Breast epithelium (tissue), 4 donors: ENCODE measurements at regions of chr11 and their contacts with region 1.

Region 1: DNA sequence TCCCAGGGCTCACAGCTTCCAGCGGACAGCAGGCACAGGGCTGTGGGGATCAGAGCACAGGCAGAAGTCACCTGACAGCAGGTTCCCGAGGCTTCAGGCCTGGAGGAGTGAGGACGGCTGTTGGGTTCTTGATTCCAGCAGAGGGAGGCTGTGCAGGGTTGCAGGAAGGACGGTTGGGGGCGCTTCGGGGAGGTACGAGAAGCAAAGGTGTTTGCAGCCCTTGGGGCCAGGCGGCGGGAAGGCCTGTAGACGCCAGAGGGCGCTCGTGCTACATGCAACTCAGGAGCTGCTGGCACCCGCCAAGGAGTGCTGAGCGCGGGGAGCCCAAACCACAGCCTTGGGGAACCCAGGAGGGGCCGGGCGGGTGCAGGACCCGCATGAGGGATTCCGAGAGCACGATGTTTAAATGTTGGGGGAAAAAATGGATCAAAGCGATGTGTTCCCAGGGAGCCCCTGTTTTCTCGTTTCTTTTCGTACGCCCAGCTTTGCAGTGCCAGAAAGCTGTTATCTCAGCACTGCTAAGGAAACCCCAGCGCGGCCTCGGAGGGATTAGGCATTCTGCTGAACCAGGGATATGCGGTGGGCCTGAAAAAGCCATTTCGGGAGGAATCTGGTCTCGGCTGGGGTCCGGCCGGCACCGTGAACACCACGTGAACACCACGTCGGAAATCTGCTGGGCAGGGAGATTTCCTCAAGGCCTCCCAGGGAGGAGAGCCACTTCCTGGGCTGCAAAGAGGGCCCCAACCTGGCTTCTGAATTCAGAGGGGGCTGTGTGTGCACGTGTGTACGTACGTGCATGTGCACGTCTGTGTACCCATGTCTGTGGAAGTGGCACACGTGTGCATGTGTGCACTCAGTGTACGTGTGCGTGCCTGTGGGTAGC is 88.1 kb downstream of the KCNQ1 start:
- DNase-seq: peak; percentile 84 to 92
- H3K4me3 ChIP-seq: peak overlapping the region; percentile 8 to 56 (median 11)
- H3K27ac ChIP-seq: peak overlapping the region; percentile 35 to 72
- H3K4me1 ChIP-seq: peaks cover 0 to 8% of the 10 kb centered on the region in 2 donors
- H3K27me3 ChIP-seq: no peaks in the 10 kb centered on the region
- CTCF ChIP-seq: peak; percentile 95 to 100 (median 100)
- POLR2A ChIP-seq: no peak

Region 2: DNA sequence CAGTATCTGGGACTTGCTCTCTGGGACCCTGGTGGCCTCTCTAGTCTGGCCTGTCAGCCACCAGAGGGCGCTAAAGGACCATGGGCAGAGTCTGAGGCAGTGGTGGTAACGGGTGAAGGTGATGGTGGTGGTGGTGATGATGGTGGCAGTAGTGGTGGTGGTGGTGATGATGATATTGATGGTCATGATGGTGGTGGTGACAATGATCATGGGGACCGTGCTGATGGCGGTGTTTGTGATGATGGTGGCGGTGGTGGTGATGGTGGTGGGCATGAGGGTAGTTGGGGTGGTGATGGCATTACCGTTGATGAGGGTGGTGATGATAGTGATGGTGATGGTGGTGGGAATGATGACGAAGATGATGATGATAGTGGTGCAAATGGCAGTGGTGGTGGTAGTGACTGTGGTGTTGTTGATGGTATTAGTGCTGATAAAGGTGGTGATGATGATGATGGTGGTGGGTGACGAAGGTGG is 104.6 kb before region 1 on chr11:
- intact Hi-C with region 1: loop called (anchors 5 kb)
- DNase-seq: peak; percentile 70 to 75
- H3K4me3 ChIP-seq: no peak overlapping the region
- H3K27ac ChIP-seq: no peak overlapping the region
- H3K4me1 ChIP-seq: no peaks in the 10 kb centered on the region
- H3K27me3 ChIP-seq: no peaks in the 10 kb centered on the region
- CTCF ChIP-seq: peak; percentile 62 to 98 (median 82)
- POLR2A ChIP-seq: no peak

Region 3: DNA sequence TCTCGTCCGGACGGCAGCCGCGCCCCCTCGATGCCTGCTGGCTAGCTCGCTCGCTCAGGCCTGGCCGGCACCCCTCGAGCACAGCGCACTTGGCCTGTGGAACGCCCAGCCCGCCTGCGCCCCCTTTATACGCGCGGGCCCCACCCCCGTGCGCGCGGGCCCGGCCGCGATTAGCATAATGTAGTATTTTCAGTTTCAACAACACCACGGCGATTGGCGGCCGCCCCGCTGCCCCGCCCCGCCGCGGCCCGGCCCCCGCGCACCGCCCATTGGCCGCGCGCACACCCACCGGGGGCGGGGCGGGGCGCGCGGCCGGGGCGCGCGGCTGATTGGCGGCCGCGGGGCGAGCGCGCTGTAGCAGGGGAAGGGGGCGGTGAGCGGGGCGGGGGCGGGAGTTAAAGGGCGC is 352.7 kb after region 1 on chr11 and contains the start of gene CDKN1C:
- intact Hi-C with region 1: loop called (anchors 2 kb)
- DNase-seq: peak; percentile 86 to 88
- H3K4me3 ChIP-seq: peak within 1 kb of the TSS; percentile 70 to 98 (median 89)
- H3K27ac ChIP-seq: peak within 1 kb of the TSS; percentile 86 to 95
- H3K4me1 ChIP-seq: peaks cover 4 to 9% of the 10 kb centered on the region in 2 donors
- H3K27me3 ChIP-seq: no peaks in the 10 kb centered on the region
- CTCF ChIP-seq: no peak
- POLR2A ChIP-seq: peak; percentile 70
- total RNA-seq, gene CDKN1C: 48.2 to 136 (median 88.8) TPM